ENCODE measurements at regions of chr6 and their contacts with region 1.

Region 1: DNA sequence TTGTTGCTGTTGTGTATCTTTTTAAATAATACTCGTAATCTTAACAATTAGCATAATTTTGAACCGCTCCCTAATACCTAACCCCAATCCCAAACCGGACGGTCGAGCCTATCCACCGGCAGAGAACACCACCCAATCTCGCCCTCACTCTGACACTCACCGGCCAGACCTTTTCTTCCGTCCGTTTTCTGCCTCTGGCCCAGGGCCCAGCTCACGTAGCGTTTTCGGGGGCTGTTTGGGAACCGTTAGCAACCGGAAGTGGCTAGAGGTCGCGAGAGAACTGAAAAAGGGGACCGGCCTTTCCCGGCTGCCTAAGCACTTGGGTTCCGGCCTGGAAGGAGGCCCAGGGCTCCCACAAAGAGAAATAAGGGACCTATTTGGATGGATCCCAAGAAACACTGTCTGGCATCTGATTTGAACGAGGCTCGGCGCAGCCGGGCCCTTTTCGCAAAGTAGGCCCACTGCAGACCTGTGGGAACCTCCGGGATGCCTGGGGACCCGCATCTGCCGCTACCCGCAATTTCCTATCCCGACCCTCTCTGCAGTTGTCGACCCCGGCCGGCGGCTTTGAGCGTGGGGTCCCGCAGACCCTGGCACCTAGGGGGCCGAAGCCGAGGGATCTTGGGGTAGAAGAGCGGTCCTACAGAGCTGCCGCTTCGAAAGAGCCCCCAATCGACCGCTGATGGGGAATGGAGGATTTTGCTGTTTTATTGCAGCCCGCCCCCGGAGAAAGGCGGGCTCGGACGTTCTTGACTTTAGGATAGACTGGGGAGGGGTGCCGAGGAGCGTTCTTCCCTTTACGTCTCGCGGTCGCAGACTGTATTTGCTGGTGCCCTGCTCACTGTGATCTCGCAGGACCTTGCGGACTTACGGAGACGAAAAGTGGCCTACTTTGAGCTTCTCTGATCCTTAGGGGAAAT is 4.8 kb upstream of the ZKSCAN8 start:
- DNase-seq: peak; percentile 96
- ATAC-seq: peak; percentile 70
- H3K4me3 ChIP-seq: peak overlapping the region; percentile 95
- H3K27ac ChIP-seq: peak overlapping the region; percentile 94
- H3K4me1 ChIP-seq: peaks cover 2% of the 10 kb centered on the region; the same call in 1 of the 2 replicates
- H3K27me3 ChIP-seq: no peaks in the 10 kb centered on the region
- CTCF ChIP-seq: no peak
- POLR2A ChIP-seq: peak; percentile 72
- RAD21 ChIP-seq: no peak

Region 2: GRCh38 chr6:27753668-27754407 is 383.0 kb before region 1 on chr6:
- CTCF ChIA-PET with region 1: no interaction called
- POLR2A ChIA-PET with region 1: no interaction called
- dilution Hi-C with region 1: no loop called
- in situ Hi-C with region 1: no loop called
- intact Hi-C with region 1: no loop called
- DNase-seq: peak; percentile 76
- ATAC-seq: peak; percentile 69
- H3K4me3 ChIP-seq: peak overlapping the region; percentile 58
- H3K27ac ChIP-seq: no peak overlapping the region
- H3K4me1 ChIP-seq: no peaks in the 10 kb centered on the region
- H3K27me3 ChIP-seq: peaks cover 7% of the 10 kb centered on the region
- CTCF ChIP-seq: no peak
- POLR2A ChIP-seq: no peak
- RAD21 ChIP-seq: no peak

Region 3: GRCh38 chr6:28124102-28124970 is 12.5 kb before region 1 on chr6 and contains the start of gene ZSCAN16:
- CTCF ChIA-PET with region 1: no interaction called
- POLR2A ChIA-PET with region 1: no interaction called
- dilution Hi-C with region 1: no loop called
- in situ Hi-C with region 1: no loop called
- intact Hi-C with region 1: loop called (anchors 2 kb)
- DNase-seq: peak; percentile 79
- ATAC-seq: peak; percentile 100
- H3K4me3 ChIP-seq: peak within 1 kb of the TSS; percentile 88
- H3K27ac ChIP-seq: peak within 1 kb of the TSS; percentile 47; the same call in 1 of the 2 replicates
- H3K4me1 ChIP-seq: peaks cover 2% of the 10 kb centered on the region; the same call in 1 of the 2 replicates
- H3K27me3 ChIP-seq: no peaks in the 10 kb centered on the region
- CTCF ChIP-seq: no peak
- POLR2A ChIP-seq: no peak
- RAD21 ChIP-seq: no peak
- total RNA-seq, gene ZSCAN16: 2.5 and 3.0 TPM in 2 replicates

Region 4: GRCh38 chr6:28218271-28219248 is 81.7 kb after region 1 on chr6:
- CTCF ChIA-PET with region 1: no interaction called
- POLR2A ChIA-PET with region 1: no interaction called
- dilution Hi-C with region 1: no loop called
- in situ Hi-C with region 1: loop called (anchors 10 kb)
- intact Hi-C with region 1: loop called (anchors 2 kb)
- DNase-seq: peak; percentile 61
- ATAC-seq: peak; percentile 95
- H3K4me3 ChIP-seq: peak overlapping the region; percentile 61
- H3K27ac ChIP-seq: peak overlapping the region; percentile 73
- H3K4me1 ChIP-seq: peaks cover 4% of the 10 kb centered on the region
- H3K27me3 ChIP-seq: no peaks in the 10 kb centered on the region; the same call in 1 of the 2 replicates
- CTCF ChIP-seq: no peak
- POLR2A ChIP-seq: no peak
- RAD21 ChIP-seq: no peak

Region 5: DNA sequence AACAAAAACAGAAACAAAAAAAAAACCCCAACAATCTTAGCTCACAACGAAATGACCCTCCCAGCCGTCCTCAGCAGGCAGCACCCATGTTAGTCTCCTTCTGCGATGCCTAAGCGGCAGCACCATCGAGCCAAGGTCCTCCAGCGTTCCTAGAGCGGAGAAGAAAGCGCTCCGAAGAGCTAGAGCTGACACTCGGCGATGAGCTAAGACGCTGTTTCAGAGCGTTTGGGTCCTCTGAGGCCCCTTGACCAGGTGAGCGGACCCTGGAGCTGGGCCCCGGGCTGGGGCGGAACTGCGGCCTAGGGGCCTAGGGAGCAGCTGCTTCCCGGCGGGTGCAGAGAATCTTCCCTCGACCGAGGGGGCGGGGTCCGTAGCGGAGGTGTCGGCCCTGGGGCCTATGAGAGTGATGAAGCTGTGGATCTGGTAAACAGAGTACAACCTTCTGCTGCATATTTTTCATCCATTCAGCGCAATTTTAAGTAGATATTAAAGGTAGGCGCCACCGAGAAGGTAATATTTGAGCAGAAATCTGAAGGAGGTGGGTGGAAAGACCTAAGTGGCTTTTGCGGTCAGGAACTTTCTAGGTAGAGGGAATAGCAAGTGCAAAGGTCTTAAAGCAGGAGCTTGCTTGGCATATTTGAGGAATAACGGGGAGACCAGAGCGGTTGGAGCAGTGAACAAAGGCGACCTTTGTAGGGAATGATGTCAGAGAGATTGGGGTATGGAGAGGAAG is 130.3 kb after region 1 on chr6 and contains the start of gene ZSCAN26:
- CTCF ChIA-PET with region 1: no interaction called
- POLR2A ChIA-PET with region 1: interaction called, 3 read pairs
- dilution Hi-C with region 1: no loop called
- in situ Hi-C with region 1: no loop called
- intact Hi-C with region 1: loop called (anchors 5 kb)
- DNase-seq: peak; percentile 89
- ATAC-seq: peak; percentile 92
- H3K4me3 ChIP-seq: peak within 1 kb of the TSS; percentile 72
- H3K27ac ChIP-seq: peak within 1 kb of the TSS; percentile 95
- H3K4me1 ChIP-seq: no peaks in the 10 kb centered on the region
- H3K27me3 ChIP-seq: no peaks in the 10 kb centered on the region
- CTCF ChIP-seq: no peak
- POLR2A ChIP-seq: peak; percentile 59; the same call in 1 of the 2 replicates
- RAD21 ChIP-seq: no peak
- total RNA-seq, gene ZSCAN26: 22.8 and 42.1 TPM in 2 replicates

Region 6: DNA sequence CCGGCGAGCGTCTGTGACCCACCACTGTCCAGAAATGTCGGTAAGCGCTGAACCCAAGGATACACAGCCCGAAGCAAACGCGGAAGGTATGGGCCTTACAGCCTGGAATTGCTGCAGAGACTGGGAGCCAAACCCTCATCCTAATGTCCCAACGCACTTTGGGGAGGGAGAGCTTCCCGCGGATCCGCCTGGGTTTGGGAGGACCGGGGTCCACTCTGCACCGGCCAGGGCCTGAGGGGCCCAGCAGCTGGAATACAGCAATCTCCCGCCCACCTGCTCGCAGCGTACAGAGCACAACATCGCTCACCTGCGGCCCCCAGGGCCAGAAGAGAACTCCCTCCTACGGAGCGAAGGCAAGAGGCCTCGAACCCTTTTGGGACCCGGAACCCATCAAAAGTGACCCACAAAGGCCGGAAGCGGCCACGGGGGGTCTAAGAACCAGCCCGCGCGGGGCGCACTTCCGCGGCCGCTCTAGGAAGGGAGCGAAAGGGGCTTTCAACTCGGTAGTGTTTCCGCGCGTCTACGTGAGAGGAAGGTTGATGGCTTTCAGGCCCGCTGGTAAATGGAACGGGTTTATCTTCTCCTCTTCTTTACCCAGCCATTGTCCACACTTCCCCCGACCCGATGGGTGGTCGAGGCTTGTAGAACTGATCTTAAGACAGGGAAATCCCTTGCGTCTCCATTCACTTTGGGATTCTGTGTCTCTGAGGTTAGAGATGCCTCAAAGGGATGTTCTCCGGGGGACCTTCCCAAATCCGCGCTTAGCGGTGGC is 262.7 kb after region 1 on chr6 and contains the start of gene ZSCAN12:
- CTCF ChIA-PET with region 1: no interaction called
- POLR2A ChIA-PET with region 1: no interaction called
- dilution Hi-C with region 1: no loop called
- in situ Hi-C with region 1: no loop called
- intact Hi-C with region 1: loop called (anchors 5 kb)
- DNase-seq: peak; percentile 89
- ATAC-seq: peak; percentile 98
- H3K4me3 ChIP-seq: peak within 1 kb of the TSS; percentile 90
- H3K27ac ChIP-seq: peak within 1 kb of the TSS; percentile 84
- H3K4me1 ChIP-seq: peaks cover 6% of the 10 kb centered on the region; the same call in 1 of the 2 replicates
- H3K27me3 ChIP-seq: no peaks in the 10 kb centered on the region
- CTCF ChIP-seq: peak; percentile 65
- POLR2A ChIP-seq: peak; percentile 76
- RAD21 ChIP-seq: no peak
- total RNA-seq, gene ZSCAN12: 6.4 and 6.5 TPM in 2 replicates

Region 7: DNA sequence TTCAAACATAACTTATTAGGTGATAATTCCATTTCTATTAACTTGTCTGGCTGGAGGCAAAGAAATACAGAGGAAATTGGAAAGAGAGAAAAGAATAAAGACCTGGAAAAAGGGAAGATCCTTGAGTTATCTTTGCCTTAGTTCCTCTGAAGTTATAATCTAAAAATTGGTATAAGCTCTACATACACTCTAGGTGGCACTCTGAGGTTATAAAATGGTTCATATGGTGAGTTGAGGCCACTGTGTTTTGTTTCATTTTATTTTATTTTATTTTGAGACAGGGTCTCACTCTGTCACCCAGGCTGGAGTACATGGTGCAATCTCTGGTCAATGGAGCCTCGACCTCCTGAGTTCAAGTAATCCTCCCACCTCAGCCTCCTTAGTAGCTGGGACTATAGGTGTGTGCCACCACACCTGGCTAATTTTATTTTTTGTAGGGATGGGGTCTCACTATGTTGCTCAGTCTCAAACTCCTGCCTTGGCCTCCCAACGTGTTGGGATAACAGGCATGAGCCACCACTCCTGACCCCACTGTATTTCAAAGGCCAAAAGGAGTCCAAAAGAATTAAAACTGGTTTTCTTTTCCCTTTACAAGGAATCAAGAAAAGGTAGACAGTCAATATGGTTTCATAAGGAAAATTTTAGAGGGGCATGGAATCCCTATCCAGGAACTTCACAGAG is 359.4 kb after region 1 on chr6:
- CTCF ChIA-PET with region 1: no interaction called
- POLR2A ChIA-PET with region 1: no interaction called
- dilution Hi-C with region 1: no loop called
- in situ Hi-C with region 1: no loop called
- intact Hi-C with region 1: no loop called
- DNase-seq: no peak
- ATAC-seq: no peak
- H3K4me3 ChIP-seq: no peak overlapping the region
- H3K27ac ChIP-seq: no peak overlapping the region
- H3K4me1 ChIP-seq: no peaks in the 10 kb centered on the region
- H3K27me3 ChIP-seq: no peaks in the 10 kb centered on the region
- CTCF ChIP-seq: 0 out of 2 replicates have a peak, but pooled peaks have one; percentile 17
- POLR2A ChIP-seq: no peak
- RAD21 ChIP-seq: 0 out of 2 replicates have a peak, but pooled peaks have one; percentile 6

Measured in IMR-90 (cell line).